ENCODE measurements at regions of chr7 and their contacts with region 1.

Region 1: GRCh38 chr7:74173866-74174605 is at the start of gene EIF4H:
- DNase-seq: peak; percentile 95
- H3K4me3 Mint-ChIP-seq: peak within 1 kb of the TSS; percentile 95
- H3K27ac Mint-ChIP-seq: peak within 1 kb of the TSS; percentile 87
- H3K4me1 Mint-ChIP-seq: peaks cover 49% of the 10 kb centered on the region
- H3K27me3 Mint-ChIP-seq: no peaks in the 10 kb centered on the region
- total RNA-seq, gene EIF4H: 295 to 320 TPM

Region 2: DNA sequence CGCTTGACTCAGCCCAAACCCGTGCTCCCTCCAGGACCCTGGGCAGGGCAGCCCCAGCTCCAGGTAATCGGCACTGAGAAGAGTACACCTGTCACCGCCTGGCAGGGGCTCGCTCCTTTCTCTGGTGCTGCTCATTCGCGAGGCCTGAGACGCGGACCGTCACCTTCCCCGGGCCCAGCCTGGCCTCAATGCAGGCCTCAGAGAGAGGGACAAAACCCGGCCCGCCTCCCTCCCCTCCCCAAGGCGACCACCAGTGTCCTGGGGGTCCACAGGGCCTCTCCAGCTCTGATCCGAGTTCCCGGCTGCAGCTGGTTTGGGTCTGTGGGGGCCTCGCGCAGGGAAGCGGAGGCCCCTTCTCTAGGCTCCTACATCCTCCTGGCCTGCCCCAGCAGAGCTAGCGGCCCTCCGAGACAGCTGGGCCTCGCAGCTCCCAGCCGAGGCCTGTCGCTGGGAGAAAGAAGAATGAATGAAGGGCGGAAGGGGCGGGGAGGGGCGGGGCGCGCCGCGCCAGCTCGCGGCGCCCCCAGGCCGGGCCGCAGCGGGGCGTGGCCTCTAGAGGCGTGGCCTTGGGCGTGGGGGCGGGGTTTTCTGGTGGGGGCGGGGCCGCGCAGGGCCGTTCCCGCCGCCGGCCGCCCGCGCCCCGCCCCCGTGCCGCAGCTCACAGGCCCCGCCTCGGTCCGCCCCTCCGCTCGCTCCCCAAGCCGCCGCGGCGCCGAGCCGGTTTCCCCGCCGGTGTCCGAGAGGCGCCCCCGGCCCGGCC is 90.7 kb before region 1 on chr7 and contains the start of gene LIMK1:
- CTCF ChIA-PET with region 1: interaction called, 4 read pairs
- POLR2A ChIA-PET with region 1: interaction called, 39 read pairs
- DNase-seq: peak; percentile 85
- H3K4me3 Mint-ChIP-seq: peak within 1 kb of the TSS; percentile 79
- H3K27ac Mint-ChIP-seq: peak within 1 kb of the TSS; percentile 78
- H3K4me1 Mint-ChIP-seq: peaks cover 15% of the 10 kb centered on the region
- H3K27me3 Mint-ChIP-seq: no peaks in the 10 kb centered on the region
- total RNA-seq, gene LIMK1: 22.5 to 26.1 TPM

Region 3: DNA sequence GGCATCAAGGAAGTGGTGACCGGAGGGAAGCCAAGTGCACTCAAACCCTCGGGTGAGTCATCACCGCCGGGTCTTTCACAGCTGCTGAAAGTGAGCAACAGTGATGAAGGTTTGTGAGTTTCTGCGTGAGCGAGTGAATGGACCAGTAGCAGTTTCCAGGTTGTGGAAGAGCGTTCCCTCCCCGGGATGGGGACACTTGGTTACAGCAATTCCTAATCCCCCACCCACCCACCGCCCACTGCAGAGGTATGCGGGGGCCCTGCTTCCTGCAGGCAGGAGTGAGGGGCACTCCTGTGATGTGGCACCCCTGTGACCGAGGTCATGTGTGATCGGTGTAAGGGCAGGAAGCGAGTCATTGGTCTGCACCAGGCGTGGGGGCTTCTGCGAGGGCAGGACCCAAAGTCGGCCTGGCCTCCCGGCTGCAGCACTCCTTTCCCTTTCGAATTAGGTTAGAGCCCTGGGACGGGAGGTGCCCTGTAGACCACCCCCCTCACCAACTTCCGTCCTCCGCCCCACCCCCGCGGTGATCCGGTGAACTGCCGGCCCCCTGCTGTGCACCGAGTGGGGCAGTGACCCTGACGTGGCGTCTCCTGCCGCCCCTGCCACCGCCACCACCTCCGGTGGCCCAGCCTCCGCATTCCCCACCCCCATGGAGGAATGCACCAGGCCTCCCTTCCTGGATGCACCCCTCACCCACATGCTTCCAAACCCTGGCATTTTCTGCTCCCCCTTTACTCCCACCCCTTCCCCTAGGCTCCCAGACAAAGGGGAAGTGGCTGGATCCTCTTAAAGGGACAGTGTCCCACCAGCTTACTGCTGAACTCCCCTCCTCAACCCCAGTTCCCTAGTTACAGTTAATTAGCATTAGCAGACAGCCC is 79.6 kb before region 1 on chr7:
- CTCF ChIA-PET with region 1: no interaction called
- POLR2A ChIA-PET with region 1: interaction called, 23 read pairs
- DNase-seq: peak; percentile 86
- H3K4me3 Mint-ChIP-seq: peak overlapping the region; percentile 71
- H3K27ac Mint-ChIP-seq: peak overlapping the region; percentile 97
- H3K4me1 Mint-ChIP-seq: peaks cover 26% of the 10 kb centered on the region
- H3K27me3 Mint-ChIP-seq: no peaks in the 10 kb centered on the region

Region 4: DNA sequence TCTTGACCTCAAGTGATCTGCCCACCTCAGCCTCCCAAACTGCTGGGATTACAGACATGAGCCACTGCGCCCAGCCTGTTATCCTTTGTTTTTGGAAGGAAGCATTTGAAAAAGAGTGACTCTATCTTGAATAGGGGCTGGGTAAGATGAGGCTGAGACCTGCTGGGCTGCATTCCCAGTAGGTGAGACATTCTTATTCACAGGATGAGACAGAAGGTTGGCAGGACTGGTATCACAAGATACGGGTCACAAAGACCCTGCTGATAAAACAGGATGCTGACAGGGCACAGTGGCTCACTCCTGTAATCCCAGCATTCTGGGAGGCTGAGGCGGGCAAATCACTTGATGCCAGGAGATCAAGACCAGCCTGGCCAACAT is 40.4 kb before region 1 on chr7:
- CTCF ChIA-PET with region 1: no interaction called
- POLR2A ChIA-PET with region 1: no interaction called
- DNase-seq: no peak
- H3K4me3 Mint-ChIP-seq: no peak overlapping the region
- H3K27ac Mint-ChIP-seq: no peak overlapping the region
- H3K4me1 Mint-ChIP-seq: peaks cover 10% of the 10 kb centered on the region
- H3K27me3 Mint-ChIP-seq: peaks cover 1% of the 10 kb centered on the region

Region 5: DNA sequence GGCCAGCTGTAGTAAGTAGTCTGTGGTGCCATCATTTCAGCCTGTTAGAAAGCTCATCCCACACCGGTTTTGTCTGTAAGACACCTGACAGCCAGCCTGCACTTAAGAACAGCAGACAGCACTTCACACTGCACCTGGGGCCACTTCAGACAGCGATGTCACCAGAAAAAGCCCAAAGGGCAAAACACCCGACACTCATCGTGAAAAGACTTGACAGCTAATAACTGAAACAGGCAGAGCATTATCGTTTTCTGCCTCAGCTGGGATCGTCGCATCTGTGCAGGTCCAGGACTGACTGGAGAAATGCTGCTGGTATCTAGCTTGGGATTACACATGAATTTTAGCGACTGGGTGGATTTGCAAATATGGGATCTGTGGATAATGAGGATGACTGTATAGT is 19.0 kb after region 1 on chr7:
- CTCF ChIA-PET with region 1: interaction called, 4 read pairs
- POLR2A ChIA-PET with region 1: interaction called, 12 read pairs
- DNase-seq: no peak
- H3K4me3 Mint-ChIP-seq: no peak overlapping the region
- H3K27ac Mint-ChIP-seq: no peak overlapping the region
- H3K4me1 Mint-ChIP-seq: no peaks in the 10 kb centered on the region
- H3K27me3 Mint-ChIP-seq: no peaks in the 10 kb centered on the region

Measured in activated CD4-positive, alpha-beta memory T cell treated with anti-CD3 and anti-CD28 coated beads, Interleukin-2, amount 10 ng/mL, durations not matched to agents 7 days and 5 days (primary cell).